Activated T-helper 1 cell treated with anti-CD3 and anti-CD28 coated beads, Interleukin-12 subunit alpha, Interleukin-12 subunit beta, Interleukin-2, Interleukin-4 antibody, amounts not matched to agents 30 ng/mL and 10 ng/mL and 1 ng/mL, durations not matched to agents 14 hours and 24 hours and 36 hours (primary cell): ENCODE measurements at regions of chr1 and their contacts with region 1.

Region 1: DNA sequence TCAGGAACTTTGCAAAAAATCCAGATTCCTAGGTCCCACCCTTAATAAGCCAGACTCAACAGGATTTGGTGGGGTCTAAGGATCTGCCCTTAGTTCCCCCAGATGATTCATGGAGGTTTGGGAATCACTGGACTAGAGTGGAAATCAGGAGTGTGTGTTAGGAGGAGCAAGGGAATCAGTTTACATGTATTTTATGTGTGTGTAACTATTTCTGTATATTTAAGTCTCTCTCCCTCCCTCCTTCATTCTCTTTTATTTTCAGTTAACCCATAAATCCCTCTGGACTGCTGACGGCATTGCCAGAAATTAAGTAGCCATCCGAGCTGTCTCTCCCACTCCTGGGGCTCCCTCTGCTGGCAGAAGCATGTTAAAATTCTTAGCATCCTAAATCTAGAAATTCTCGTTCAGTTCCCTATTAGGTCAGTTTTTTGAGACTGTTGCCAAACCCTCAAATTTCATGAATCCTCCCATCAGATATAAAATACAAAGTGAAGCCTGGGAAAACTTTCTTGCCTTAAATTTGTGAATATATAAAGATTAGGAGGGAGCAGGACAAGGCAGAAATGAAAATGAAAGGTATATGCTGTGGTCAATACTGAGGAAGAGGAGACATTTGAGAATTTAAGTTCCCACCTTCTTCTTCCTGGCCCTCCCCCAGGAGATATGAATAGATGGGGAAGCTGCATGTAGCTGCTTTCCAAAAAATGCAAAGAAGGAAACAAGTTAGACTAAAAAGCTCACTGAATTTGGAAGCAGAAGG is 11.7 kb upstream of the HSD11B1 start:
- DNase-seq: peak; percentile 65
- H3K4me3 Mint-ChIP-seq: peak overlapping the region; percentile 3
- H3K27ac Mint-ChIP-seq: peak overlapping the region; percentile 74
- H3K4me1 Mint-ChIP-seq: peaks cover 70% of the 10 kb centered on the region
- H3K27me3 Mint-ChIP-seq: no peaks in the 10 kb centered on the region

Region 2: DNA sequence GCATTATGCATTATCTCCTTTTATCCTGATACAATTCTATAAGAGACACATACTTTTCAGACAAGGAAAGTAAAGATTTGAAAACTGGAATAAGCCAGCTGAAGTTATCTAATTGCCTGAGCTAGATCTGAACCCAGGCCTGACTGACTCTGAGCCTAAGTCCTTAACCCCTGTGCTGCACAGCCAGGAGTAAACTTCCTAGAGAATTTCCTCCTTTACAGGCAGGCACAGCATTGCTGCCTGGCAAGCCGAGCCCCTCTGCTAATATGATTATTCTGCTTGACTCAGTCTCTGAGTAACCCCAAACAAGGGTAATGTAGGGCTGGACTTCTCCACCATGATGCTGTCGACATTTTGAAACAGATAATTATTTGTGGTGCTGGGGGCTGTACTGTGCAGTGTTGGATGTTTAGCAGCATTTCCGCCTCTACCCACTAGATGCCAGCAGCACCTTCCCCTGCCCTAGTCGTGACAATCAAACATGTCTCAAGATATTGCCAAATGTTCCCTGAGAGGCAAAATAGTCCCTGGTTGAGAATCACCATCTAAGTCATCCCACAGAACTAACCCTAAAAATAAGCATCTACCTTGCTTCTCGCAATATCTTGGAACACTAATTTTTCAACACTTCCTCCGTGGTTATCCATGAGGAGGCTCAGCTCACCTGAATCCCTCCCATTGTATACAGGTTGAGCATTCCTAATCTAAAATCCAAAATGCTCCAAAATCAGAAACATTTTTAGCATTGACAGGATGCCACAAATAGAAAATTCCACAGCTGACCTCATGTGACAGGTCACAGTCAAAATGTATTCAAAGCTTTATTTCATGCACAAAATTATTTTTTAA is 90.9 kb before region 1 on chr1:
- intact Hi-C with region 1: loop called (anchors 1 kb)
- DNase-seq: peak; percentile 14
- H3K4me3 Mint-ChIP-seq: no peak overlapping the region
- H3K27ac Mint-ChIP-seq: no peak overlapping the region
- H3K4me1 Mint-ChIP-seq: peaks cover 19% of the 10 kb centered on the region
- H3K27me3 Mint-ChIP-seq: peaks cover 26% of the 10 kb centered on the region

Region 3: GRCh38 chr1:209651148-209651547 is 41.8 kb before region 1 on chr1:
- intact Hi-C with region 1: loop called (anchors 2 kb)
- DNase-seq: peak; percentile 70
- H3K4me3 Mint-ChIP-seq: peak overlapping the region; percentile 58
- H3K27ac Mint-ChIP-seq: peak overlapping the region; percentile 96
- H3K4me1 Mint-ChIP-seq: peaks cover 76% of the 10 kb centered on the region
- H3K27me3 Mint-ChIP-seq: no peaks in the 10 kb centered on the region

Region 4: GRCh38 chr1:209710093-209710492 is 17.2 kb after region 1 on chr1:
- intact Hi-C with region 1: loop called (anchors 2 kb)
- DNase-seq: no peak
- H3K4me3 Mint-ChIP-seq: peak overlapping the region; percentile 31
- H3K27ac Mint-ChIP-seq: peak overlapping the region; percentile 85
- H3K4me1 Mint-ChIP-seq: peaks cover 72% of the 10 kb centered on the region
- H3K27me3 Mint-ChIP-seq: no peaks in the 10 kb centered on the region

Region 5: GRCh38 chr1:209962856-209963255 is 269.9 kb after region 1 on chr1:
- intact Hi-C with region 1: no loop called
- DNase-seq: no peak
- H3K4me3 Mint-ChIP-seq: no peak overlapping the region
- H3K27ac Mint-ChIP-seq: no peak overlapping the region
- H3K4me1 Mint-ChIP-seq: no peaks in the 10 kb centered on the region
- H3K27me3 Mint-ChIP-seq: peaks cover 17% of the 10 kb centered on the region